Right cardiac atrium (tissue), 5 donors: ENCODE measurements at regions of chr9 and their contacts with region 1.

Region 1: DNA sequence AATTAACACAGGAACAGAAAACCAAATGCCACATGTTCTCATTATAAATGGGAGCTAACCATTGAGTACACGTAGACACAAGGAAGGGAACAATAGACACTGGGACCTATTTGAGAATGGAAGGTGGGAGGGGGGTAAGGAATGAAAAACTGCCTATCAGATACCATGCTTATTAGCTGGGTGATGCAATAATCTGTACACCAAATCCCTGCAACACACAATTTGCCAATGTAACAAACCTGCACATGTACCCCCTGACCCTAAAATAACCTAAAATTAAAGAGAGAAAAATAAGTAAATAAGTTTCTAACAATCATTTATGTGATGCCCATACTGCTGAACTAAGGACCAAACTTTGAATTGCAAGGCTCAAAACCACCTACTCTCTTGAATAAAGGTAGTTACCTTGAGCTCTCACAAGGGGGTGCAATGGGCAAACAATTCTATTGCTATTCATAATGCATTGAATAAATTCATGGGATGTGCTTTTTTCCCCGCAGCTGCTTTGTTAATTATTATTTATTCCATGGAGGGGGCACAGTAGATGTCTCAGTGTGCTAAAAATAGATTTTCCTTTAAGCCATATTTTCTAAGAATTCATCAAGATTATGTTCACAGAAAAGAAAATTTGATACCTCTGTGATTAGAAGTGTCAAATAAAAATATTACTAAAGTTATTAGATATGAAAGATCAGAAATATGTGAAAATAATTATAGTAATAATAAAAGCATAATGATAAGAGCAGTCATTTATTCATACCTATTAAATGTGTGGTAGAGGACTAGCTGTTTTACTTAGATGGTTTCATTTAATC is 76.2 kb upstream of the PTPN3 start:
- DNase-seq: no peak
- ATAC-seq: peak; percentile 59 to 67
- H3K4me3 ChIP-seq: no peak overlapping the region
- H3K27ac ChIP-seq: no peak overlapping the region
- H3K4me1 ChIP-seq: peaks cover 2% of the 10 kb centered on the region
- H3K27me3 ChIP-seq: no peaks in the 10 kb centered on the region

Region 2: GRCh38 chr9:109640580-109641371 is 66.5 kb after region 1 on chr9:
- intact Hi-C with region 1: loop called in 1 of 4 experiments (anchors 5 kb)
- DNase-seq: peak; percentile 58 to 87 (median 84)
- ATAC-seq: peak; percentile 72 to 79
- H3K4me3 ChIP-seq: peak overlapping the region; percentile 64
- H3K27ac ChIP-seq: no peak overlapping the region
- H3K4me1 ChIP-seq: peaks cover 3% of the 10 kb centered on the region
- H3K27me3 ChIP-seq: no peaks in the 10 kb centered on the region

Region 3: GRCh38 chr9:109652964-109653363 is 78.7 kb after region 1 on chr9:
- intact Hi-C with region 1: loop called in 3 of 4 experiments (anchors 2 to 5 kb)
- DNase-seq: no peak
- ATAC-seq: peak; percentile 71 to 78
- H3K4me3 ChIP-seq: no peak overlapping the region
- H3K27ac ChIP-seq: no peak overlapping the region
- H3K4me1 ChIP-seq: no peaks in the 10 kb centered on the region
- H3K27me3 ChIP-seq: no peaks in the 10 kb centered on the region

Region 4: DNA sequence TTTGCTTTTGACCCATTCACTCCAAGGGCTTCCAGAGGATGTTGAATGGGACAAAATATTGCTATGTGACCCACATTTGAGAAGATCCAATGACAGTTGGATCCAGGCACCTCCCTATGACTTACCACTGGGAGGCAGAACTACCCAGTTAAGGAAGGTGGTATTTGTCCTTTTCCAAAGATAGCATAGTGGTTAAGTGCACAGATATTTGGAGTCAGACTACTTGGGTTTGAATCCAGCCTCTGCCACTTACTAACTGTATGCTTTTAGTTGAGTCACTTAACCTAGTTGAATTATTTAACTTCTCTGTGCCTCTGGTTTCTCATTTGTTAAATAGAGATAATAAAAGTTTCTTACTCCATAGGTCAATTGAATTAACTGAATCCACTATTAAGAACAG is 131.2 kb after region 1 on chr9:
- intact Hi-C with region 1: no loop called
- DNase-seq: no peak
- ATAC-seq: peak in 1 of 2 donors; percentile 48
- H3K4me3 ChIP-seq: no peak overlapping the region
- H3K27ac ChIP-seq: no peak overlapping the region
- H3K4me1 ChIP-seq: peaks cover 12% of the 10 kb centered on the region
- H3K27me3 ChIP-seq: no peaks in the 10 kb centered on the region

Region 5: DNA sequence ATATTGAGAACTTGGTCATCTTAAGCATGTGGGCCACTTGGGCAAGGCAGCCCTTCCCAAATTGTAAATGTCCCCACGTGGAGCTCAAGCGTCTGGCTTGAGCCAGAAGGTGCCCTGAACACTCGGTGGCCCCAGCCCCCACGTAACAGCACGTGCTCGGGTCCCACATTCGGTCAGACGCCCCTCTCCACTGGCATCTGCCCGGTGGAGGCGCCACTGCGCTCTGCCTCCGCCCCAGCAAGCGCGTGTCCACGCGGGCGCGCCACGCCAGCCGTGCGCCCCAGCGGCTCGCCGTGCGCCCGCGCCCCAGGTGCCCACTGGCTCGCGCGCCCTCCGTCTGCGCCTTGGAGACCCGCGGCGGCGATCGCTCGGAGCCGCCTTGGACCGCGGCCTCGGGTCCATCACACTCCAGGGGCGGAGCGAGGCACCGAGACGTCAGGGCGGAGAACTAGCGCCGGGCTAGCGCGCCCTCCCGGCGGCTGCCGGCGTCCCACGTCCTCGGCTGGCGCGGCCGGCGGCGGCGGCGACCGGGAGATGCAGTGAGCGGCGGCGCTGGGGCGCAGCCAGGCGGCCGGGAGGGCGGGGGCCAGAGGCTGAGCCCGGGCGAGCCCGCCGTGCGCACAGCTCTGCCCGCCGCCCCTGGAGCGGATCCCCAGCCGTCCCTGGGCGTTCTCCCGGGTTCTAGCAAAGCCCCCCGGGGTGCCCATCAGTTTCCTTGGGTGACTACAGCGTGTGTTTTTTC is 205.6 kb after region 1 on chr9 and contains the start of gene PALM2AKAP2:
- intact Hi-C with region 1: loop called in 1 of 4 experiments (anchors 10 kb)
- DNase-seq: peak; percentile 85 to 93 (median 91)
- ATAC-seq: peak; percentile 90
- H3K4me3 ChIP-seq: peak within 1 kb of the TSS; percentile 89
- H3K27ac ChIP-seq: peak within 1 kb of the TSS; percentile 80
- H3K4me1 ChIP-seq: peaks cover 8% of the 10 kb centered on the region
- H3K27me3 ChIP-seq: no peaks in the 10 kb centered on the region
- total RNA-seq, gene PALM2AKAP2: 82.5 to 130 (median 86.2) TPM

Region 6: GRCh38 chr9:109817846-109818472 is 243.7 kb after region 1 on chr9:
- intact Hi-C with region 1: loop called in 1 of 4 experiments (anchors 10 kb)
- DNase-seq: peak in 2 of 3 donors; percentile 29 to 40
- ATAC-seq: peak; percentile 80 to 84
- H3K4me3 ChIP-seq: no peak overlapping the region
- H3K27ac ChIP-seq: peak overlapping the region; percentile 65
- H3K4me1 ChIP-seq: peaks cover 7% of the 10 kb centered on the region
- H3K27me3 ChIP-seq: no peaks in the 10 kb centered on the region